Heart right ventricle (tissue), 16 donors: ENCODE measurements at regions of chr6 and their contacts with region 1.

Region 1: GRCh38 chr6:70884074-70884983 is 72.5 kb downstream of the B3GAT2 start:
- DNase-seq: peak; percentile 38 to 63
- ATAC-seq: peak; percentile 62 to 89 (median 86)
- H3K4me3 ChIP-seq: no peak overlapping the region
- H3K27ac ChIP-seq: no peak overlapping the region
- H3K4me1 ChIP-seq: no peaks in the 10 kb centered on the region
- H3K27me3 ChIP-seq: peaks cover 0 to 8% (median 0%) of the 10 kb centered on the region in 7 donors
- CTCF ChIP-seq: peak; percentile 84 to 97 (median 94)

Region 2: DNA sequence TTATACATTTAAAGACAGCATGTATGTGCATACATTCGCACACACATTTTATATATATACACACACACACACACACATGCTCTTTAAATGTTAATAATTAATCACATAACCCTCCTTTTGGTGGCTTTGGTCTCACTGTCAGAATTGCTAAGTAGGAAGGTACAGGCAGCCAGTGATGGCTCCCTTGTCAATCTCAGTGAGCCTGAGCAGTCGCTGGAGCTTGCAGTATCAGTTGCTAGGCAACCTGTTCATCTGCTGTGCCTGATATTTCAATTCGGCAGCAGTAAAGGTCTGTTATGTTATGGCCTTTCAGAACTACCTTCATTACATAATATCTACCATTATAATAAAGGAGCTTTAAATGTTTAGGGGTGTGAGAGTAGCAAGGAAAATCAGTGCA is 1461.9 kb before region 1 on chr6:
- intact Hi-C with region 1: no loop called
- DNase-seq: no peak
- ATAC-seq: no peak
- H3K4me3 ChIP-seq: no peak overlapping the region
- H3K27ac ChIP-seq: no peak overlapping the region
- H3K4me1 ChIP-seq: no peaks in the 10 kb centered on the region
- H3K27me3 ChIP-seq: no peaks in the 10 kb centered on the region
- CTCF ChIP-seq: no peak

Region 3: GRCh38 chr6:70520575-70520974 is 363.8 kb before region 1 on chr6:
- intact Hi-C with region 1: loop called in 1 of 10 experiments (anchors 10 kb)
- DNase-seq: no peak
- ATAC-seq: no peak
- H3K4me3 ChIP-seq: no peak overlapping the region
- H3K27ac ChIP-seq: no peak overlapping the region
- H3K4me1 ChIP-seq: no peaks in the 10 kb centered on the region
- H3K27me3 ChIP-seq: no peaks in the 10 kb centered on the region
- CTCF ChIP-seq: peak in 6 of 9 donors; percentile 6 to 37 (median 34)

Region 4: DNA sequence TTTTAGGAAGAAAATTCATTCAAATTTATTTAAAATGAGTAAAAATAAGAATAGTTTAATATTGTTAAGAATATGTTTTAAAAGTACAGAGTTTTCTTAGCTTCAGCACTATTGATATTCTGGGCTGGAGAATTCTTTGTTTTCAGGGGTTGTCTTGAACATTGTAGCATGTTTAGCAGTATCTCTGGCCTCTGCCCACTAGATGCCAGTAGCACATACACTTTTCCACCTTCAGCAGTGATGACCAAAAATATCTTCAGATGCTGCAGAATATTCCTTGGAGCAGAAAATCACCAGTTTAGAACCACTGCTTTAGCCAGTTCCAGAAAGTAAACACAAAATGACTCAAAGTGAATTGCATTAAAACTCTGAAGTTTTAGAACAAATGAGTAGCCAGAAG is 337.0 kb before region 1 on chr6:
- intact Hi-C with region 1: loop called in 7 of 10 experiments (anchors 5 to 10 kb)
- DNase-seq: no peak
- ATAC-seq: peak; percentile 58 to 85 (median 72)
- H3K4me3 ChIP-seq: no peak overlapping the region
- H3K27ac ChIP-seq: no peak overlapping the region
- H3K4me1 ChIP-seq: peaks cover 0 to 5% (median 0%) of the 10 kb centered on the region in 9 donors
- H3K27me3 ChIP-seq: no peaks in the 10 kb centered on the region
- CTCF ChIP-seq: peak in 7 of 9 donors; percentile 37 to 67 (median 52)

Region 5: DNA sequence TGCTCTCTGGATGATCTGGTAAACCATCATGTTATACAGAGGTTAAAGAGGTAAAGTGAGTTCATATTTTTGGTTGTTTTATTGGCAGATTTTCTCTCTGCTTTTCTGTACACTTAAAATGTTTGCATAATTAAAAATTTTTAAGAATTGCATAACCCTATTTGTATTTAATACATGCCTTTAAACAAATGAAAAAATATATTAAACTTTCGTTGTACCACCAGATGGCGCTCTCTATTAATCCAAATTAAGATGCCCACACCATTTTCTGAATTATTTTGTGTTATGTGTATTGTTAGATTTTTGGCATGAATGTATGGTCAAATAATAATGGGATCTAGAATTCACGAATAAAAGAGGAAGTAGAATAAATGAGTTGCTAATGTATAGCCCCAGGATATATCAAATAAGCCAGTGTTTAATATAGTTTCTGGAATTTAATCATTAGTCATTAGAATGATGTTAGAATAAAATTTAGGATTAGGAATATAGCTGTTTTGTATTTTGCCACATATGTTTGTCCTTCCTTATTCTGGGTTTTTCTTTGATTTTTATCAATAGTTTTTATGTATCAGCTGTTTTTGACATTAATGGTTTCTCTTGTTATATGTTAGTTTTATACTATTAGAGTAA is 177.7 kb before region 1 on chr6:
- intact Hi-C with region 1: loop called (anchors 1 to 5 kb)
- DNase-seq: no peak
- ATAC-seq: no peak
- H3K4me3 ChIP-seq: no peak overlapping the region
- H3K27ac ChIP-seq: no peak overlapping the region
- H3K4me1 ChIP-seq: peaks cover 0 to 38% (median 17%) of the 10 kb centered on the region in 9 donors
- H3K27me3 ChIP-seq: no peaks in the 10 kb centered on the region
- CTCF ChIP-seq: peak; percentile 55 to 80 (median 68)